ENCODE measurements at regions of chr1 and their contacts with region 1.

Region 1: DNA sequence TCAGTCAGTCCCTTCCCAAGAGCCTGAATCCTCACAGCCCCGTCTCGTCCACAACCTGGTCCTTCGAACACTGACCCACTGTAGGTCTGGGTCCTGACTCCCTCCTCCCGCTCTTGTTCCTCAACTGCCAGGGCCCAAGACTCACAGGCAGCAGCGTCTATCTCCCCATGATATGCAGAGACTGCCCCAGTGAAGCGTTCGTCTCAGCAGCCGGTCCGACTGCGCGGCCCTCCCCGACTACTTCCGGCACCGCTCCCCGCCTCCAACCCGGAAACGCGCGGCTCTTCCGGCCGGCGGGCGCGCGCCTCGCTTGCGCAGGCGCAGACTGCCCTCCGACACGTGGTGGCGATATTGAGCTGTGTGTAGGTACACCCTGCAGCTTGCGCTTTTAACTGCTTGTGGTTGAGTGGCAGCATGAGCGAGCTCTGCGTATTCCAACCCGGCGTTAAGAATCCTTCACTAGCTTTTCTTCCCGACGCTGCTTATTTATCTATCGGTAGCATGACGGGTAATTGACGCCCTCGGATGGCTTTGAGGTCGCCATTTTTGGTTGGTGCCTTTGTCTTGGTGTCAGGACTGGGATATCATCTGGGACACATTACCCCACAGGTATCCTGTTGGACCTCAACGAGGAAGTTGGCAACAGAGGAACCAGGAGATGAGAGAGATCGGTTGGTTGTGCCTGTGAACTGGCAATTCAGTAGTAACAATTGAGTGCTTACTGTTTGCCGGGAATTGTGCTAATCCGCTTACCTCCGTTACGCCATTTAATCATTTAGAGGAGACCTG is at the start of gene TAF12:
- DNase-seq: peak; percentile 88 to 92 (median 91)
- H3K4me3 ChIP-seq: peak within 1 kb of the TSS; percentile 89 to 99
- H3K4me3 Mint-ChIP-seq: peak within 1 kb of the TSS; percentile 96 to 100 (median 99)
- H3K27ac ChIP-seq: peak within 1 kb of the TSS; percentile 74
- H3K27ac Mint-ChIP-seq: peak within 1 kb of the TSS; percentile 97 to 100 (median 98)
- H3K4me1 ChIP-seq: peaks cover 48% of the 10 kb centered on the region
- H3K4me1 Mint-ChIP-seq: peaks cover 32 to 62% (median 46%) of the 10 kb centered on the region in 4 donors
- H3K27me3 ChIP-seq: no peaks in the 10 kb centered on the region
- H3K27me3 Mint-ChIP-seq: no peaks in the 10 kb centered on the region
- total RNA-seq, gene TAF12: 23.5 to 25.2 TPM

Region 2: DNA sequence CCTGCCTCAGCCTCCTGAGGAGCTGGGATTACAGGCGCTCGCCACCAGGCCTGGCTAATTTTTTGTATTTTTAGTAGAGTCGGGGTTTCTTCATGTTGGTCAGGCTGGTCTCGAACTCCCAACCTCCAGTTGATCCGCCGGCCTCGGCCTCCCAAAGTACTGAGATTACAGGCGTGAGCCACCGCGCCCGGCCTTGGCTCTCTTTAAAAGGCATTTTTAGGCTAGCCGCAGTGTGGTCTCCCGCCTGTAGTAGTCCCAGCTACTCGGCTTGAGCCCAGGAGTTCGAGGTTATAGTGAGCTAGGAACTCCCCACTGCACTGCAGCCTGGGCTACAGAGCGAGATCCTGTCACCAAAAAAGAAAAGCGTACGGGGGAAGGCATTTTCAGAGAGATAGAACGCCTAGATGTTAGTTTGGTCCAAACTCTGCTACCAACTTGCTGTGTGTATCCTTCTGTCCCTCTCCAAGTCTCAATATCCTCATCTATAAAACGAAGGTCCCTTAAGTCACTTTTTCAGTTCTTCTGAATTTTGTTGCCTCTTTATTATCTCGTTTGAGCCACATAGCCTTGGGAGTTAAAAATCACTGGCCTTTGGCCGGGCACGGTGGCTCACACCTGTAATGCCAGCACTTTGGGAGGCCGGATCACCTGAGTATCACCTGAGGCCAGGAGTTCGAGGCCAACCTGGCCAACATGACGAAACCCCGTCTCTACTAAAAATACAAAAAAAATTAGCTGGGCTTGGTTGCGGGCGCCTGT is 313.5 kb before region 1 on chr1:
- CTCF ChIA-PET with region 1: no interaction called
- POLR2A ChIA-PET with region 1: interaction called, 12 read pairs
- intact Hi-C with region 1: no loop called
- DNase-seq: no peak
- H3K4me3 ChIP-seq: peak overlapping the region; percentile 51 to 53
- H3K4me3 Mint-ChIP-seq: peak overlapping the region; percentile 94 to 96 (median 95)
- H3K27ac ChIP-seq: peak overlapping the region; percentile 84
- H3K27ac Mint-ChIP-seq: peak overlapping the region; percentile 97 to 100 (median 99)
- H3K4me1 ChIP-seq: peaks cover 29% of the 10 kb centered on the region
- H3K4me1 Mint-ChIP-seq: peaks cover 19 to 39% (median 26%) of the 10 kb centered on the region in 4 donors
- H3K27me3 ChIP-seq: no peaks in the 10 kb centered on the region
- H3K27me3 Mint-ChIP-seq: peaks cover 0 to 2% of the 10 kb centered on the region in 2 donors

Region 3: DNA sequence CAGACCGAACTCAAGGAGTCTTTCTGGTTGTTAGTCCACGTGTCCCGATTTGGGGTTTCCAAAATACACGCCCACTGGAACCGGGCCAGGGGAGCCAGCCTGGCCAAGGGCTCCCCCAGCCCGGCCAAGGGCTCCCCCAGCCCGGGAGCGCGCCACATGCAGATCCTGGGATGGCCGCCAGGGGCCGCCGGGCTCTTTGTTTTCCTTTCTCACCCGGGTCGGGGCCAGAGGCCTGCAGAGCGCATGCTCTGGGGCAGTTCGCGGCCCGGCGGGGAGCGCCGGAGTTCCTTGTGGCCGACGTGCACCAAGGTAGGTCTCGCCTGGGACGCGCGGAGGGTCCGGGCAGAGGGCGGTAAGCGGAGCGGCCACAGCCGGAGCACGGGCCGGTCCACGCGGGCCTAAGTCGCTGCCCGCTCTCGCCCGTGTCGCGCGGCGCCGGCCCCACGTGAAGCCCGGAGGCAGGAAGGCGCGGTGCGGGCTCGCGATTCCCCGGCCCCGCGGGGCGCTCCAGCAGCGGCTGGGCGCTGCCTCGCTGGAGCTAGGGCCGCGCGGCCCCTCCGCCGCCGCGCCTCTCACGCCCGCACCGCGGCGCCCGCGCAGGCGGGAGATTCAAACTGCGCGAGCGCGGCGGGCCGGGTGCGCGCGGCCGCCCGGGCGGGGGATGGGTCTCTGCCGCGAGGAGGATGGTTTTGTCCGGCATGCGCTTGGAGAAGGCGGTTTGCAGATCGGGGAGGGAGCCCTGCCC is 124.9 kb before region 1 on chr1:
- CTCF ChIA-PET with region 1: interaction called, 4 read pairs
- POLR2A ChIA-PET with region 1: interaction called, 5 read pairs
- intact Hi-C with region 1: loop called (anchors 2 kb)
- DNase-seq: peak; percentile 84 to 87 (median 86)
- H3K4me3 ChIP-seq: peak overlapping the region; percentile 33 to 65
- H3K4me3 Mint-ChIP-seq: peak overlapping the region; percentile 85 to 92 (median 90)
- H3K27ac ChIP-seq: peak overlapping the region; percentile 56
- H3K27ac Mint-ChIP-seq: peak overlapping the region; percentile 67 to 94 (median 85)
- H3K4me1 ChIP-seq: peaks cover 27% of the 10 kb centered on the region
- H3K4me1 Mint-ChIP-seq: peaks cover 15 to 32% (median 21%) of the 10 kb centered on the region in 4 donors
- H3K27me3 ChIP-seq: no peaks in the 10 kb centered on the region
- H3K27me3 Mint-ChIP-seq: no peaks in the 10 kb centered on the region

Region 4: GRCh38 chr1:28552758-28553663 is 90.0 kb before region 1 on chr1 and contains the start of gene TRNAU1AP:
- CTCF ChIA-PET with region 1: no interaction called
- POLR2A ChIA-PET with region 1: interaction called, 21 read pairs
- intact Hi-C with region 1: loop called (anchors 1 kb)
- DNase-seq: peak; percentile 96 to 98 (median 97)
- H3K4me3 ChIP-seq: peak within 1 kb of the TSS; percentile 89 to 96
- H3K4me3 Mint-ChIP-seq: peak within 1 kb of the TSS; percentile 98 to 100 (median 99)
- H3K27ac ChIP-seq: peak within 1 kb of the TSS; percentile 80
- H3K27ac Mint-ChIP-seq: peak within 1 kb of the TSS; percentile 96 to 99 (median 98)
- H3K4me1 ChIP-seq: peaks cover 21% of the 10 kb centered on the region
- H3K4me1 Mint-ChIP-seq: peaks cover 11 to 35% (median 19%) of the 10 kb centered on the region in 4 donors
- H3K27me3 ChIP-seq: no peaks in the 10 kb centered on the region
- H3K27me3 Mint-ChIP-seq: no peaks in the 10 kb centered on the region
- total RNA-seq, gene TRNAU1AP: 46.3 to 46.7 TPM

Region 5: GRCh38 chr1:28668191-28668955 is 25.3 kb after region 1 on chr1 and contains the start of gene GMEB1:
- CTCF ChIA-PET with region 1: interaction called, 11 read pairs
- POLR2A ChIA-PET with region 1: interaction called, 202 read pairs
- intact Hi-C with region 1: loop called (anchors 1 kb)
- DNase-seq: peak; percentile 79 to 86 (median 84)
- H3K4me3 ChIP-seq: peak within 1 kb of the TSS; percentile 89 to 92
- H3K4me3 Mint-ChIP-seq: peak within 1 kb of the TSS; percentile 92 to 97 (median 93)
- H3K27ac ChIP-seq: peak within 1 kb of the TSS; percentile 88
- H3K27ac Mint-ChIP-seq: peak within 1 kb of the TSS; percentile 98 to 100 (median 98)
- H3K4me1 ChIP-seq: peaks cover 21% of the 10 kb centered on the region
- H3K4me1 Mint-ChIP-seq: peaks cover 13 to 26% (median 18%) of the 10 kb centered on the region in 4 donors
- H3K27me3 ChIP-seq: no peaks in the 10 kb centered on the region
- H3K27me3 Mint-ChIP-seq: no peaks in the 10 kb centered on the region
- total RNA-seq, gene GMEB1: 21.8 to 21.9 TPM

Region 6: DNA sequence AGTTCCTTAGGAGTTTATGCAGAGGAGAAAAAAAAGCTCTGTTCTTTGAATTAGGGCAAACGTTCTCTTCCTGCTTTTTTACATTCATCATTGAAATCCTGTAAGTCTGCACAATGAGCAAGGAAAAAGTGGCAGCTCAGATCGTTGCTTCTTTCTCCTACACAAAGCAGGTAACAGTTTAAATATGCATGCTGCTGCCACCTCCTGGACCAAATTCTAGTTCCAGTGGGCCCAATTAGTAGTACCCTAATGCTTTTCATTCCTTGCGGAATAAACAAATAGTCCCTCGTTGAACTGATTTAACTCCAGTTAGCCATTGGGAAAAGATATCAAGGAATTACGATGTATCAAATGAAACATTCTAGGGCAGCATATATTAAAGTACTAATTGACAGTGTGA is 113.8 kb after region 1 on chr1:
- CTCF ChIA-PET with region 1: interaction called, 15 read pairs
- POLR2A ChIA-PET with region 1: interaction called, 6 read pairs
- intact Hi-C with region 1: no loop called
- DNase-seq: peak in 2 of 5 donors; percentile 6 to 16
- H3K4me3 ChIP-seq: no peak overlapping the region
- H3K4me3 Mint-ChIP-seq: peak overlapping the region in 1 of 8 donors; percentile 52
- H3K27ac ChIP-seq: no peak overlapping the region
- H3K27ac Mint-ChIP-seq: peak overlapping the region in 2 of 7 donors; percentile 57
- H3K4me1 ChIP-seq: peaks cover 63% of the 10 kb centered on the region
- H3K4me1 Mint-ChIP-seq: peaks cover 21 to 36% (median 30%) of the 10 kb centered on the region in 4 donors
- H3K27me3 ChIP-seq: no peaks in the 10 kb centered on the region
- H3K27me3 Mint-ChIP-seq: no peaks in the 10 kb centered on the region

Region 7: DNA sequence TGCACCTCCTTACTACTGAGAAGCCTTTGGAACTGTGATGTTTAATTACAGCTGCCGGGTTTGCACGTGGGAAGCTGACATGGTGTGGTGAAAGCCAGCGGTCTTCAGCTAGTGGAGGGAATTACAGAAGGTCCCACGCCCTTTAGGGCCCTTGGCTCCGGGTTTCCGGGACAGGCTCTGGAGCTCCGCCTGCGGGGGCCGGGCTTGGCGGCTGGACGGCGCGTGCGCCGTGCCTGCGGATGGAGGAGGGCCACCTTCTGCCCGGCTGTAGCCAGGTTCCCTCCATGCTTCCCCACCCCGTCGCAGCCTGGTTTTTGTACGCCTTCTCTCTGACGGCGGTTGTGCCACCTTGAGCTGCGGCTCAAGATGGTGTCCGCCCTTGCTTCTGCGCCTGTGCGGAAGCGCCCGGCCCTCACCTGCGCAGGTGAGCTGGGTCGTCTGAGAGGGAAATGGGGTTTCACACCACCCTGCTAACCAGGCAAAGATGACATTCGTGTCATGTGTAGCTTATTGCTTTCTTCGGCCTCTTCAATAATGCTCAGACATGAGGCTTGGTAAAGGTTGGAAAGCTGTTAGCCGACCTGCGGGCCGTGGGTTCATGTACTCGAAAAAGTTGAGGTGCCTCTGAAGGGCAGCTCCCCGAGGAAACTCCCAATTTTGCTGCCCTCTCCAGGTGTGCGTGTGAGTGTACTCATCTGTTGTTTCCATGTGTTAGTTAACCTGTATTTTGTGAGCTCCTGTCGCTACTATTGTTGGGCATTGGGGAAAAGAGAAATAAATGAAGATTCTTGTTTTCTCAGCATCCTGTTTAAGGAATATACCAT is 132.3 kb after region 1 on chr1:
- CTCF ChIA-PET with region 1: interaction called, 5 read pairs
- POLR2A ChIA-PET with region 1: interaction called, 21 read pairs
- intact Hi-C with region 1: no loop called
- DNase-seq: peak; percentile 66 to 81 (median 74)
- H3K4me3 ChIP-seq: peak overlapping the region; percentile 8 to 64
- H3K4me3 Mint-ChIP-seq: peak overlapping the region; percentile 81 to 91 (median 85)
- H3K27ac ChIP-seq: peak overlapping the region; percentile 28
- H3K27ac Mint-ChIP-seq: peak overlapping the region; percentile 70 to 93 (median 87)
- H3K4me1 ChIP-seq: peaks cover 6% of the 10 kb centered on the region
- H3K4me1 Mint-ChIP-seq: peaks cover 5 to 13% (median 9%) of the 10 kb centered on the region in 4 donors
- H3K27me3 ChIP-seq: no peaks in the 10 kb centered on the region
- H3K27me3 Mint-ChIP-seq: no peaks in the 10 kb centered on the region

Region 8: GRCh38 chr1:28815533-28816185 is 172.6 kb after region 1 on chr1:
- CTCF ChIA-PET with region 1: no interaction called
- POLR2A ChIA-PET with region 1: no interaction called
- intact Hi-C with region 1: no loop called
- DNase-seq: no peak
- H3K4me3 ChIP-seq: no peak overlapping the region
- H3K4me3 Mint-ChIP-seq: no peak overlapping the region
- H3K27ac ChIP-seq: no peak overlapping the region
- H3K27ac Mint-ChIP-seq: no peak overlapping the region
- H3K4me1 ChIP-seq: no peaks in the 10 kb centered on the region
- H3K4me1 Mint-ChIP-seq: peaks cover 0 to 6% (median 2%) of the 10 kb centered on the region in 4 donors
- H3K27me3 ChIP-seq: peaks cover 11% of the 10 kb centered on the region
- H3K27me3 Mint-ChIP-seq: peaks cover 40 to 43% of the 10 kb centered on the region in 2 donors